ENCODE measurements at regions of chr15 and their contacts with region 1.

Region 1: DNA sequence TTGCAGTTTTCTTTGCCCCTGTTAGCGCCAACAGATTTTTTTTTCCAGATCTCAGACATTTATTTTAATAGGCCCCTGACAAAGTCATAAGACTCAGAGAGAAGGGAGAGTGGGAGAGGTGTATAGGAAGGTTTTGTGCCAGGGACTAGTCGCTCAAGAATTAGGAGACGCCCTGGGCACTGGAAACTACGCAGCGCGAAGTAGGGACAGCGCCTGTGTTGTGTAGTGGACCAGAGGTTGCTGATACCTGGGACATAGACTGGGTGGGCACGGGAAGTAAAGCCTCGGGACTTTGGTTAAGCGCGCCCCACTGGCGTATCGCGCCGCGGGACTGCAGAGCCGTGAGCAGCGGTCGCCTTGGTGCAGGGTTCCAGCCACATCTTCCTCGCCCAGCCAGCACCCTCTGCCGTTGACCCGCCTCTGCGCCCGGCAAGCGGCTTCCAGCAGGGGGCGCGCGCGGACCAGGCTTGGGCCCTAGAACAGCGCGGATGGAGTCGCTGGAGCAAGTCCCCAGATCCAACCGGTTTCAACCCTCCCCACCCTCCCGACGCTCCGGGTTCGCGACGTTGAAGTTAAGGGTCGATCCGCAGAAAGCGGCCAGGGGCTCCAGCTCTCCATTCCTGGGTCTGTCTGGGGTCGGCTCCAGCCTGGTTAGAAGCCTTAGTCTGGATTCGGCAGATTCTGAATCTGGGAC is 3.0 kb upstream of the ISLR2 start:
- DNase-seq: peak; percentile 90
- H3K4me3 ChIP-seq: no peak overlapping the region
- H3K27ac ChIP-seq: no peak overlapping the region
- H3K4me1 ChIP-seq: no peaks in the 10 kb centered on the region
- H3K27me3 ChIP-seq: peaks cover 49% of the 10 kb centered on the region
- CTCF ChIP-seq: peak; percentile 95

Region 2: DNA sequence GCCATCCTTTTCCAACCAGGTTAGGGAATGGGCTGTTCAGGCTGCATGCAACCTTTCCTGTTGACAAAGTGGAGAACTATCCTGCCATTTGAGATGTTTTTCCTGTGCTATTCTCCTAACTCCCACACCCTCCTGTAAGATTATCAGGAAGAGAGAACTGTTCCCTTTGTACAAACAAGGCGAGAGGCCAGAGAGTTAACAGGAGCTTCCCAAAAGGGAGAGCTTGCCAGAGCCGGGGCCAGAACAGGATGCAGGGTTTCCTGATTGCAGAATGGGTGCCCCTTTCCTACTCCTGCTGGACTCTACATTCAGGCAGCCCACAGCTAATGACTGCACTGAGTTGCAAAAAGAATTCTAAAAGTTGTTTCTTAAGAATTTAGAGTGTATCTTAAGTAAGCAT is 115.8 kb before region 1 on chr15:
- intact Hi-C with region 1: no loop called
- DNase-seq: peak; percentile 58
- H3K4me3 ChIP-seq: no peak overlapping the region
- H3K27ac ChIP-seq: no peak overlapping the region
- H3K4me1 ChIP-seq: peaks cover 10% of the 10 kb centered on the region
- H3K27me3 ChIP-seq: no peaks in the 10 kb centered on the region
- CTCF ChIP-seq: no peak

Region 3: DNA sequence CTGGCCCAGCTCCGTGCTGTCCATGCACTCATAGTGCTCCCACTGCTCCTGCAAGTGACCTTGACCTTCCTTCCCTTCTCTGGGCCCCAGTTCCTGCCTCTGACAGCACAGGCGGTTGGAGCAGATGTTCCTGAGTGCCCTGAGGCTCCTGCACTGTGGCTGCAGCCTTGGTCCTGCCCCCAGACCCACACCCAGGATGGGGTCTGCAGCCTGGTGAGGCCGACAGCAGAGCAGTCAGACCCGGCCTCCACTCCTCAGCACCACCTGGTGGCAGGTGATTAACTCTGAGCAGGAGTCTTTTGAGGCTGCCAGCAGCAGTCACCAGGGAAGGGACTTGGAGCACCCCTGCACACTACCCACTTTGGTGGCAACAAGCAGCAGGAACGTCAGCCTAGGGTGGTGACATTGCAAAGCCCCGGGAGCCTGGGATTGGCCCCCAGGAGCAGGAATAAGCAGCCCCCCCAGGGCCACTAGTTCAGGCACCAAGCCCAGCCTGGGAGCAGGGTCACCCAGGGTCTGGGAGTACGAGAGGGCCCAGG is 175.5 kb after region 1 on chr15:
- intact Hi-C with region 1: loop called (anchors 2 kb)
- DNase-seq: no peak
- H3K4me3 ChIP-seq: no peak overlapping the region
- H3K27ac ChIP-seq: no peak overlapping the region
- H3K4me1 ChIP-seq: no peaks in the 10 kb centered on the region
- H3K27me3 ChIP-seq: no peaks in the 10 kb centered on the region
- CTCF ChIP-seq: peak; percentile 44

Region 4: DNA sequence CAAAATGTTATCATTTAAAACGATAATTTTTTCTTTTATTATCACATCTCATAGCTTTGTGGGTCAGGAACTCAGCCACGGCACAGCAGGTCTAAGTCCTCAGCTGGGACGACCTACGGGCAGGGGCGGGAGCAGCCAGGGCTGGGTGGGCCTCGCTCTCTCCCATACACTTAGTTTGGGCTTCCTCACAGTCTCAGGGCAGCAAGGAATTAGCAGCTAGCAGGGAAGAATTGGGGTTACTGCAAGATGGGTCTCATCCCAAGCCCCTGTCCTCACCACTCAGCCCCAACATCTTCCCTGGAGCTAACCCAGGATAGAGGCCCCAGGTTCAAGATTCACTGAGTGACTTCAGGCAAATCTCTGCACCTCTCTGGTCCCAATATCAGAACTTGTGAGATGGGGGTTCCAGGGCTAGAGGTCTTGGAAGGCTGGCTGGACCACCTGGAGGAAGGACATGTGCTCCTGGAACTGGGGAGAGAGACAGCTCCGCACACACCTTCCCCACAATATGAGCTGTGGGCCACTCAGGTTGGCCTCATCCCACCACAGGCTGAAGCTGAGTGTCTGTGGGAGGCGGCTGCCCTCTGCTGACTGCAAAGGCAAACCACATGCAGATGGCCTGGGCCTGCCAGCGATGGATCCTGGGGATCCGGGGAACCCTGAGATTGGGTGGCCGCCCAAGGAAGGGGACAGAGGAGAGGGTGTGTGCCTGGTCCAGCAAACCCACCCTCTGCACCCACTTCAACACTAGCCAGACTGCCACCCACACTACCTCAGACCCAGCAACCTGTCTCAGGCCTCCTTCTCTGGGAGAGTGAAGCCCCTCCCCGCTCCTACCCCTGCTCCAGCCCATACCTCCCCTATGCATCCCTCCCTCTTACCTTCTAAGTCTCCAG is 195.0 kb after region 1 on chr15:
- intact Hi-C with region 1: loop called (anchors 5 kb)
- DNase-seq: peak; percentile 46
- H3K4me3 ChIP-seq: no peak overlapping the region
- H3K27ac ChIP-seq: no peak overlapping the region
- H3K4me1 ChIP-seq: no peaks in the 10 kb centered on the region
- H3K27me3 ChIP-seq: no peaks in the 10 kb centered on the region
- CTCF ChIP-seq: peak; percentile 58

Measured in colonic mucosa (tissue), 4 donors.